GM10248 (cell line): ENCODE measurements at regions of chr2 and their contacts with region 1.

Region 1: DNA sequence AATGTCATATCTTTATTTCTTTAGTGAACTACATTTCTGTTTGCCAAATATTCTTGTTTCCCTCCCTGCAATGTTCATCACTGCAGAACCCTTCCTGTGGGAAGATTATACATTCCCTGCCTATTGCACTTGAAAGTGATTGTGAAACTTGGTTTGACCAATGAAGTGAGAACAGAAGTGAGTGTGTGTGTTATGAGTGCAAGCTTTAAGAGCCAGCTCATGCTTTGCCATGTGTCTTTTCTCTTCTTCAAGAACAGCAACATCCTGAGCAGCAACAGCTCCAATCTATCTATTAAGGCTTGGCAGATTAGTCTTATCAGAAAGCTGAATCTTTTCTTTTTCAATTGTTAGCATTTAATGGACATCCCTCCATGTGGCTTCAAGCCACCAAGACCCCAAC is 42.0 kb upstream of the UBE2E3 start:
- DNase-seq: no peak
- CTCF ChIP-seq: no peak

Region 2: DNA sequence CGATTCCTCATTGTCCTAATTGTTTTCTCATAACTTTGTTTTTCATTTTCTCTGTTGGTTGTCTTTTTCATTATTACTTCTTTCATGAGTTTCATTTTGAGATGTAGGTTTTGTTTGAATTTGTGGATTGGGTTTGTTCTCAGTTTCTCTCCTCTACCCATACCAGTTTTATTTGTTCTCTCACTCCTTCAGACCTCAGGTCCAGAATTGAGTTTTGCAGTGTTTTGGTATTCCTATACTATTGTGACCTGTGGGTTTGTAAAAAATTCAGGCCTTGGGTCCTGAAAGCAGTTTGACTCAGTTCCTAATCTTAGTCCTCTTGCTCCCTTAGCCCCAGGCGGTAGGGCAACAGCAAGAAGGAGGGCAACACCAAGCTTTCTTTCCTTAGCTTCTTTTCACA is 13.6 kb after region 1 on chr2:
- CTCF ChIA-PET with region 1: interaction called, 13 read pairs
- POLR2A ChIA-PET with region 1: no interaction called
- DNase-seq: no peak
- CTCF ChIP-seq: no peak